Psoas muscle (tissue), 8 donors: ENCODE measurements at regions of chr6 and their contacts with region 1.

Region 1: DNA sequence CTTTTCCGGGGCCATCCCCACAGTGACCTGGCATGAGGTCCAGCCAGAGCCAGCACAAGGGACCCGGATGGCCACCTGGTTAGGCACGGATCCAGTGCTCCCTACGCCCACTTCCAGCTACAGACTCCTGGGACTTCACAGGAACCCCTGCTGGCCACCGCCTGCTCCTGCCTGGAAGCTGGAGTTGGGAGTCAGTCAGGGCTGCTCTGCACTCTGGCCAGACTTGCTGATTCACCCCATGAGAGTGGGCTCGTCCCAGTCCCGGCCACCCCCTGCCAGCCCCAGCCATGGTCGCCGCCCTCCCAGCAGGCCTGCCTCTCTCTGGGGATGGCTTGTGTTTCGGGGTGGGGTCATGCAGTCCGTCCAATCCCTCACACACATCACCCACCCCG is 125.8 kb downstream of the DLL1 start:
- DNase-seq: peak; percentile 41 to 69
- ATAC-seq: peak; percentile 22 to 60 (median 58)
- H3K4me3 ChIP-seq: no peak overlapping the region
- H3K27ac ChIP-seq: peak overlapping the region; percentile 23
- H3K4me1 ChIP-seq: peaks cover 17% of the 10 kb centered on the region
- H3K27me3 ChIP-seq: no peaks in the 10 kb centered on the region
- CTCF ChIP-seq: no peak

Region 2: DNA sequence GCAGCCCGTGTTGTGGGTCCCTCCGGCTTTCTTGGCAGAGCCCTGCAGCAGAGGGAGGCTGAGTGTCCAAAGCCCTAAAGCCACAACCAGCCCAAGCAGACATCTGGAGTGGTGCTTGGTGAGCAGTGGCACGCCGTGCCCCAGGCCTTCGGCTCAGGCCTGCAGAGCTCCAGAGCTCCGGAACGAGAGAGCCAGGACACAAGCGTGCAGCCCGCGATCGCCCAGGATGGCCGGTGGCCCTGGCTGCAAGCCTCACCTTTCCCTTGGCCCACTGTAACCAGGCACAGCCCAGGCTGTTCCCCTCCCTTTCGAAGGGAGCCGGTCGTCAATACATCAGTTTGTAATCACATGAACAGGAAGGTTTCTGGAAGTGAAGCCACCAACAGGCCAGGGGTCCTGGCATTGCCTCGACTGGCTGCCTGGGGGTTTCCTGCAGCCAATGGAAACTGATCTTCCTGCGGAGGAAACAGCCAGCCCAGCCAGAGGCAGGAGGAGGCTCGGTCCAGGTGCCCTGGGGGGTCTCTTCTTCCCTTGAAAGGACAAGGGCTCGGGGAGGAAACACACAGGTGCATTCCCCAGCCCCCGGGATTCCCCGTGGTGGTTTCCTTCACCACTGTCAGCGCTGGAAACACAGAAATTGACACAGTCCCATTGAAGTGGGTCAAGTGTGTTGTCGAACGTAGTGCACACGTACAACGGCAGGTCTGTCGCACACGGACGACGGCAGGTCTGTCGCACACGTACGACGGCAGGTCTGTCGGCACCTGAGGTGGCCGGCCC is 44.7 kb after region 1 on chr6:
- intact Hi-C with region 1: no loop called
- DNase-seq: no peak
- ATAC-seq: no peak
- H3K4me3 ChIP-seq: no peak overlapping the region
- H3K27ac ChIP-seq: no peak overlapping the region
- H3K4me1 ChIP-seq: no peaks in the 10 kb centered on the region
- H3K27me3 ChIP-seq: peaks cover 0 to 23% (median 0%) of the 10 kb centered on the region in 3 donors
- CTCF ChIP-seq: no peak

Region 3: GRCh38 chr6:170279977-170280688 is 115.1 kb after region 1 on chr6:
- intact Hi-C with region 1: loop called in 1 of 2 experiments (anchors 10 kb)
- DNase-seq: peak; percentile 76 to 89
- ATAC-seq: peak; percentile 83 to 89 (median 87)
- H3K4me3 ChIP-seq: peak overlapping the region; percentile 61
- H3K27ac ChIP-seq: peak overlapping the region; percentile 82
- H3K4me1 ChIP-seq: peaks cover 23% of the 10 kb centered on the region
- H3K27me3 ChIP-seq: peaks cover 0 to under 1% (median 0%) of the 10 kb centered on the region in 3 donors
- CTCF ChIP-seq: no peak